Ascending aorta (tissue), 2 donors: ENCODE measurements at regions of chr2 and their contacts with region 1.

Region 1: DNA sequence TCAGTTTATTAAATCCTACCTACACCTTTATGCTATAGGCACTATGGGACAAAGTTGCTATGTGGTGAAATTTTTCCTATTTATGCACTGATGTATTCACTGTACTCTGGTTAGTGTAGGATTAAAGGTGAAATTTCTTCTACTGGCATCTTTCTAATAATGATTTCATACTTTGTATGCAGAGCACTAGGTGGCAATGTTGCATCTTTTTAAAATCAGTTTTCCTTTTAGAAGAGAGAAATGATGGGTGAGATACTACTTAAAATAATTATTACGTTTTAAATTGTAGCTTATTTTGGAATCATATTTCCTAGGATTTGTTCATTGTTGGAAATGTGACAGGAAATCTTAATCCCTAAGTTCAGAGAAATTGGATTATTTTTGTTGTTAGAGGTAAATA is 150.9 kb downstream of the CD8B2 start:
- DNase-seq: no peak
- H3K4me3 ChIP-seq: no peak overlapping the region
- H3K27ac ChIP-seq: no peak overlapping the region
- H3K4me1 ChIP-seq: peaks cover 0 to 5% of the 10 kb centered on the region in 2 donors
- H3K27me3 ChIP-seq: no peaks in the 10 kb centered on the region
- CTCF ChIP-seq: peak; percentile 29 to 55 (median 42)

Region 2: GRCh38 chr2:106851087-106851874 is 213.2 kb after region 1 on chr2:
- intact Hi-C with region 1: no loop called
- DNase-seq: no peak
- H3K4me3 ChIP-seq: peak overlapping the region; percentile 22 to 41
- H3K27ac ChIP-seq: peak overlapping the region; percentile 81 to 85
- H3K4me1 ChIP-seq: peaks cover 10 to 73% of the 10 kb centered on the region in 2 donors
- H3K27me3 ChIP-seq: no peaks in the 10 kb centered on the region
- CTCF ChIP-seq: no peak

Region 3: DNA sequence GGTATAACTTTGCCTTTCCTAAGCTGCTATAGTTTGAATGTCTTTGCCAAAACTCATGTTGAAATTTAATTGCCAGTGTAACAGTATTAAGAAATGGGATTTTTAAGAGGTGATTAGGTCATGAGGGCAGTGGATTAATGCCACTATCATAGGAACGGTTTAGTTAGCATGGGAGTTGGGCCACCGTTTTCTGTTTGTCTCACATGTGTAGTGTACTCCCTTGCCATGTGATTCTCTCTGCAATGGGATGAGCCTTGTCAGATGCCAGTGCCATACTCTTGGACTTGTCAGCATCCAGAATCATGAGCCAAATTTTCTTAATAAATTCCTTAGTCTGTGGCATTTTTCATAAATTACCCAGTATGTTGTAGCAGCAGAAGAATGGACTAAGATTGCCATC is 799.8 kb after region 1 on chr2:
- intact Hi-C with region 1: loop called (anchors 2 kb)
- DNase-seq: no peak
- H3K4me3 ChIP-seq: no peak overlapping the region
- H3K27ac ChIP-seq: no peak overlapping the region
- H3K4me1 ChIP-seq: no peaks in the 10 kb centered on the region
- H3K27me3 ChIP-seq: no peaks in the 10 kb centered on the region
- CTCF ChIP-seq: peak in 1 of 3 experiments; percentile 29

Region 4: GRCh38 chr2:107669335-107669734 is 1031.3 kb after region 1 on chr2:
- intact Hi-C with region 1: loop called (anchors 5 kb)
- DNase-seq: no peak
- H3K4me3 ChIP-seq: no peak overlapping the region
- H3K27ac ChIP-seq: no peak overlapping the region
- H3K4me1 ChIP-seq: no peaks in the 10 kb centered on the region
- H3K27me3 ChIP-seq: no peaks in the 10 kb centered on the region
- CTCF ChIP-seq: peak in 1 of 3 experiments; percentile 7

Region 5: GRCh38 chr2:107936433-107937359 is 1298.7 kb after region 1 on chr2:
- intact Hi-C with region 1: loop called (anchors 5 kb)
- DNase-seq: no peak
- H3K4me3 ChIP-seq: no peak overlapping the region
- H3K27ac ChIP-seq: no peak overlapping the region
- H3K4me1 ChIP-seq: no peaks in the 10 kb centered on the region
- H3K27me3 ChIP-seq: no peaks in the 10 kb centered on the region
- CTCF ChIP-seq: peak in 2 of 3 experiments; percentile 28 to 41